Left colon (tissue), 2 donors: ENCODE measurements at regions of chr20 and their contacts with region 1.

Region 1: DNA sequence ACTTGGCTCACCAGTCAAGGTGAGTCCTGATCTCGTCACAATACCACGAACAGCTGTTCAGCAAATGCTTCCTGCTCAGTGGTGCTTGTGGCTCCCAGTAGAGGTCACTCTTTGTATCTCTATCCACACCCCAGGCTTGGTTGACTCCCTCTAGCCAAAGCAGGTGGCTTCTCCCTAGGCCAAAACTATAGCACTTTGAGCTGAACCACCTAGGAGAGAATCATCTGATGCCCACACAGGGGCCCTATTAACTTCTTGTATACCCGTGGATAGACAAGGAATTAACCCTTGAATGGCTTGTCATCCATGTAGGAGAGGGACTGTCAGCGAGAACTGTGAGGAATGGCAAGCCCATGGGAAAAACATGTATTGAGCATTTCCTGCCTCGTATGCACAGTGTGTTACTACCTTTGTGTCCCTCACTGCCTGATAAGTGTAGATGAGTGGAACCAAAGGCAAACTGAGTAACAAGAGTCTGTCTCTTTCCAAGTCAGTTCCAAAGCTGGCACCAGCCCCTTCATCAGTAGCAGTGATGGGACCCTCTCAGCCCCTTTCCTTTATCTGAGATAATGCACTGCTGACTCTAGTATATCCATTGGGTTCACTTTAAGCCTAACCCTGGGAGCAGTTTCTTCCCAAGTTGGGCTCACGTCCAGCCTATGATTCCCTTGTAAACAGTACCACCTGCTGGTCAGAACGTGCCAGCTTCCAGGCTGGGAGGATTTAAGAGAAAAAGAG is 42.5 kb downstream of the EIF2S2 start:
- DNase-seq: peak; percentile 56 to 77
- ATAC-seq: peak; percentile 93

Region 2: GRCh38 chr20:33862709-33863403 is 206.7 kb before region 1 on chr20:
- intact Hi-C with region 1: loop called in 1 of 2 experiments (anchors 5 kb)
- DNase-seq: peak; percentile 47 to 58
- ATAC-seq: peak; percentile 53

Region 3: GRCh38 chr20:33915726-33916331 is 153.7 kb before region 1 on chr20:
- intact Hi-C with region 1: no loop called
- DNase-seq: peak; percentile 28 to 69
- ATAC-seq: peak; percentile 83

Region 4: GRCh38 chr20:33933469-33933909 is 136.0 kb before region 1 on chr20:
- intact Hi-C with region 1: loop called in 1 of 2 experiments (anchors 5 kb)
- DNase-seq: peak; percentile 48 to 59
- ATAC-seq: peak; percentile 92